Sigmoid colon (tissue), 7 donors: ENCODE measurements at regions of chr12 and their contacts with region 1.

Region 1: GRCh38 chr12:15532364-15532977 is 210.2 kb downstream of the PTPRO start:
- DNase-seq: no peak
- H3K4me3 ChIP-seq: no peak overlapping the region
- H3K27ac ChIP-seq: no peak overlapping the region
- H3K4me1 ChIP-seq: peaks cover 0 to 7% (median 0%) of the 10 kb centered on the region in 4 donors
- H3K27me3 ChIP-seq: no peaks in the 10 kb centered on the region
- CTCF ChIP-seq: peak in 3 of 4 experiments; percentile 15 to 48 (median 25)
- EP300 ChIP-seq: no peak
- POLR2A ChIP-seq: no peak

Region 2: GRCh38 chr12:15584366-15585041 is 52.0 kb after region 1 on chr12:
- intact Hi-C with region 1: loop called (anchors 5 kb)
- DNase-seq: no peak
- H3K4me3 ChIP-seq: no peak overlapping the region
- H3K27ac ChIP-seq: no peak overlapping the region
- H3K4me1 ChIP-seq: no peaks in the 10 kb centered on the region
- H3K27me3 ChIP-seq: no peaks in the 10 kb centered on the region
- CTCF ChIP-seq: peak in 3 of 4 experiments; percentile 53 to 62 (median 60)
- EP300 ChIP-seq: no peak
- POLR2A ChIP-seq: no peak